ENCODE measurements at regions of chr2 and their contacts with region 1.

Region 1: DNA sequence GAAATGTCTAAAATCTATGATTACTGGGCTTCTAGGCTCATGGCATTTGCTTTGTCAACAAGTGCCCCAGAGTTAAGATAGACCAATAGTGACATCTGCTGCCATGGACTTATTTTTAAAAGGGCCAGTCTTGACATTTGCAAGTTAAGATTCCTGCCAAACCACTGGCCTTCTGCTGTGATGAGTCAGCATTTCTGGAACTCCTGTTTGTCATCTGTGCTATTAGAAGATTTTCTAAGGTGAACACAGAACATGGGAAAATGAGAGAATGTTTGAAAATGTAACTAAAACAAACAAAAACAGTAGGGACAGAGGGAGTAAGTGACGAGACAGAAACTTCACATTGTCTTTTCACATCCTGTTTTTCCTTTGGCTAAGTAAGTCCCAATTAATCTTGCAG is 93.7 kb upstream of the WDR75 start:
- DNase-seq: peak; percentile 94
- ATAC-seq: peak; percentile 94
- H3K4me3 ChIP-seq: peak overlapping the region; percentile 29; the same call in 1 of the 2 replicates
- H3K27ac ChIP-seq: peak overlapping the region; percentile 79
- H3K4me1 ChIP-seq: peaks cover 32% of the 10 kb centered on the region
- H3K27me3 ChIP-seq: no peaks in the 10 kb centered on the region
- CTCF ChIP-seq: peak; percentile 67

Region 2: DNA sequence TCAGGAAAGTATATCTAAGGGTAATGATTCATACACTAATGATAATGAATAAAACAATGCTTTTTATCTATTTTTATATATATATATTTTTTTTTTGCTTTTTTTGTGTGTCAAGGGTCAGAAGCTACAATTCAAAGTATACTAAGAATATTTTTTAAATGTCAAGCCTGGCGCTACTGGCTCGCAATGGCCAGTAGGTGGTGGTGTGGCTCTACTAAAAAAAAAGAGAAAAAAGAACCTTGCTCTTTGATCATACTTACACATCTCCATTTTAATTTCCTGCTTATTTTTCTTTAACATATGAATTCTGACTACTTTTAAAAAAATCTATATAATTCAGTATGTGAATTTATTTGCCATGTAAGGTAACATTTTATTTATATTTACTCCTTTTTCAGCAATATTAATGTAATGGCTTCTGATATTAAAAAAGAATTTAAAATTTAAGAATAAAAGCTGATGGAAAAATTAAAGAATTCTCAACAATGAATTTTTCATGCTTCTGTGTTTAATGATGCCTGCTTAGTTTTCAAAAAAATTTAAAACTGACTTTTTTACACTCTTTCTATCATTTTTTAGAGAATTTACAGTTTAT is 822.9 kb before region 1 on chr2:
- CTCF ChIA-PET with region 1: interaction called, 3 read pairs
- POLR2A ChIA-PET with region 1: no interaction called
- intact Hi-C with region 1: loop called (anchors 2 kb)
- DNase-seq: peak; percentile 75
- ATAC-seq: no peak
- H3K4me3 ChIP-seq: no peak overlapping the region
- H3K27ac ChIP-seq: no peak overlapping the region
- H3K4me1 ChIP-seq: peaks cover 5% of the 10 kb centered on the region; the same call in 1 of the 2 replicates
- H3K27me3 ChIP-seq: no peaks in the 10 kb centered on the region
- CTCF ChIP-seq: peak; percentile 61

Region 3: GRCh38 chr2:188978291-188979081 is 369.1 kb before region 1 on chr2:
- CTCF ChIA-PET with region 1: no interaction called
- POLR2A ChIA-PET with region 1: no interaction called
- intact Hi-C with region 1: loop called (anchors 1 kb)
- DNase-seq: peak; percentile 49
- ATAC-seq: peak; percentile 75
- H3K4me3 ChIP-seq: no peak overlapping the region
- H3K27ac ChIP-seq: no peak overlapping the region
- H3K4me1 ChIP-seq: peaks cover 12% of the 10 kb centered on the region; the same call in 1 of the 2 replicates
- H3K27me3 ChIP-seq: no peaks in the 10 kb centered on the region
- CTCF ChIP-seq: peak; percentile 78

Region 4: DNA sequence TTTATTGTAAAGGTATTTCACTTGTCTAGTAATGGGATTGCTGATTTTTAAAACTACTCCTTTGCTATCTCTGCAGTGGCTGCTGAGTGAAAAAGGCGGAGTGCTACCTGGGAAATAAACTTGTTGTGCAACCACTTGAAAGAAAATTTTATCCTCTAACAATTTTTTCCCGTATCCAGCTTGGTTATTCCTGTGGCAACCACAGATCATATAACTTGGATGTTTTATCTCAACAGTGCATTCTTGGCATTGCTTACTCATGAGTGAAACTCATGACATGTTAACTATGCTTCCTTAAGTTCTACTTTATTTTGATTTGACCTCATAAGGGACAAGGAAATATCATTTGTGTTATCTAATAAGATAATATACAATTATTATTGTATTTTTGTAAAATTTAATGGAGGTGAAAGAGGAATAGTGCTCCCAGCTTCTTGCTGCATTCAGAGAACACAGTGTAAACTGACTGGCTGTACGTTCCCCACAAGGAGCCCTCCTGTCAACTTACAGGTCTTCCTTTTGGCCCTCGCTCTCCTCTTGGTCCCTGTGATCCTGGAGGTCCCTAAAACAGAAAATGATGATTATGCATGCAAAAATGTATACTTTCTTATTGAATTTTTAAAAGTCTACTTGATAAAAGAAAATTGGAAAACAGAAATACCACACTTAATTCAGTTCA is 250.6 kb before region 1 on chr2:
- CTCF ChIA-PET with region 1: no interaction called
- POLR2A ChIA-PET with region 1: no interaction called
- intact Hi-C with region 1: loop called (anchors 1 kb)
- DNase-seq: peak; percentile 88
- ATAC-seq: peak; percentile 86
- H3K4me3 ChIP-seq: no peak overlapping the region
- H3K27ac ChIP-seq: peak overlapping the region; percentile 22
- H3K4me1 ChIP-seq: peaks cover 34% of the 10 kb centered on the region
- H3K27me3 ChIP-seq: no peaks in the 10 kb centered on the region
- CTCF ChIP-seq: no peak

Region 5: DNA sequence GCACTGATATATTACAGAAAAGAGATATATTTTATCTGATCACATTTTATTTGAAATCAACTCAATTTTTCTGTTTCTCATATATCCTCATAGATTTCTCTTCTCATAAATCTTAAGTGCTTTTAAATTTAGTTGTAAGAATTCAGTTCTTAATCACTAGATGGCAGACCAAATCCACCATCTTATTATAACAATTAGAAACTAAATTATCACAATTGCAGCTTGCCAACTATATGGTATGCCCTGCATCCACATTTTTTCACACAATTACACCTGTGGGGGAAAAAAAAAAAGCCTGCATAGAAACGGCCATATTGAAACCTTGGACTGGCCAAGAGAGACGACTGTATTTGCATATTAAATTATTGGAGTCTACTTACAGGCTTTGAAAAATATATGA is 232.4 kb before region 1 on chr2:
- CTCF ChIA-PET with region 1: no interaction called
- POLR2A ChIA-PET with region 1: no interaction called
- intact Hi-C with region 1: loop called (anchors 1 kb)
- DNase-seq: peak; percentile 57
- ATAC-seq: peak; percentile 33
- H3K4me3 ChIP-seq: no peak overlapping the region
- H3K27ac ChIP-seq: peak overlapping the region; percentile 15; the same call in 1 of the 2 replicates
- H3K4me1 ChIP-seq: peaks cover 18% of the 10 kb centered on the region
- H3K27me3 ChIP-seq: no peaks in the 10 kb centered on the region
- CTCF ChIP-seq: peak; percentile 59

Region 6: DNA sequence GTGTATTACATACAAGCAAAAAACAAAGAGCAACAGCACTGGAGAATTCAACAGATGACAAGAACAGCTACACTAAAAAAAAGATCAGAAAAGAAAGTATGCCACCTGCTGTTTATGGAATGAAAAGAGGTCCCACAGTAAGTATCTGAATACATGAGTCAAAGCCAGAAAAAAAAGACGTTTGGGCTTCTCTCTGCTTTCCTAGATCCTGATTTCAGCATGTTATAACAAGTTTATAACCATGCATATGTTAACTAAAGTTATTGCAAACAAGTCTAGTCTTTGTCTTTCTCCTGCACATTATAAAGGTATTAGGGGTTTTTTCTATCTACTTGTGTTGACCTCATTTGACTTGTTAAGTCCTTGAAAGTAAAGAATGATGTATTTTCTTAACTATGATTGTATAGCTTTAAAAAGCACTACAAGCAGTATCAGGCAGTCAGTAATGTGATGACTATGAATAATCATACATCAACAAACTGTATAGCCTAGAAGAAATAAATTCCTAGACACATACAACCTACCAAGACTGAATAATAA is 59.5 kb before region 1 on chr2:
- CTCF ChIA-PET with region 1: interaction called, 3 read pairs
- POLR2A ChIA-PET with region 1: no interaction called
- intact Hi-C with region 1: loop called (anchors 2 kb)
- DNase-seq: peak; percentile 84
- ATAC-seq: peak; percentile 87
- H3K4me3 ChIP-seq: no peak overlapping the region
- H3K27ac ChIP-seq: peak overlapping the region; percentile 38
- H3K4me1 ChIP-seq: peaks cover 35% of the 10 kb centered on the region
- H3K27me3 ChIP-seq: no peaks in the 10 kb centered on the region
- CTCF ChIP-seq: peak; percentile 93

Region 7: DNA sequence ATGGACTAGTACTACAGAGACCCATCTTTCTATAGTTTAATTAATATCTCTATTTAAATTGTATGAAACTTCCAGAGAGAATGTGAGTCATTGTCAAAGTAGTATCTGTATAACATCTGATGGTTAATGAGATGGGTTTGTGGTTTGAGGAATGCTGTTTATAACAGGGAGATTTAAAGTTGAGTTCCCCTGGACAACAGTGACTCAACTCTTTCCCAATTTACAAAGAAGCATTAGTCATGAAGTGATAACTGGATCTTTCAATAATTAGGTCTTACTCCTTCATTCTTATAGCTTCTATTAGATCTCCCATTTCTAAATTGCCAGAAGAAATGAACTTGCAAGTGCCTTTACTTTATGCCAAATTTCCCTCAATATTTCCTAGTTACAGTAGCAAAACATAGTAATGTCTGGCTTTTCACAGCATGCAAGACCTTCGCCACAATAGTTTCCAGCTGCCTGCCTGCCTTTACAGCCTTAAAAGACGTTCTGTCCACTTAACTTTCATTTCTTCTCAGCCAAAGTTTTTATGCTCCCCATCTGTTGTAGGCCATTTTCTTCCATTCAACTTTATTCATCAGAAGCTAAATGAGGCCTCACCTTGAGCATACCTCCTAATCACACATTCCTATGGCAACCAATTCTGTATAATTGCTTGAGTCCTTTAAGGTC is 46.0 kb after region 1 on chr2:
- CTCF ChIA-PET with region 1: no interaction called
- POLR2A ChIA-PET with region 1: no interaction called
- intact Hi-C with region 1: loop called (anchors 1 kb)
- DNase-seq: peak; percentile 94
- ATAC-seq: peak; percentile 97
- H3K4me3 ChIP-seq: peak overlapping the region; percentile 43; the same call in 1 of the 2 replicates
- H3K27ac ChIP-seq: peak overlapping the region; percentile 73
- H3K4me1 ChIP-seq: peaks cover 22% of the 10 kb centered on the region
- H3K27me3 ChIP-seq: no peaks in the 10 kb centered on the region
- CTCF ChIP-seq: no peak